Activated CD4-positive, alpha-beta memory T cell treated with anti-CD3 and anti-CD28 coated beads for 36 hours (primary cell): ENCODE measurements at regions of chr13 and their contacts with region 1.

Region 1: GRCh38 chr13:112443995-112444860 is 68.1 kb downstream of the SPACA7 start:
- DNase-seq: peak; percentile 75
- H3K4me3 Mint-ChIP-seq: no peak overlapping the region
- H3K27ac Mint-ChIP-seq: no peak overlapping the region
- H3K4me1 Mint-ChIP-seq: no peaks in the 10 kb centered on the region
- H3K27me3 Mint-ChIP-seq: peaks cover 15% of the 10 kb centered on the region

Region 2: DNA sequence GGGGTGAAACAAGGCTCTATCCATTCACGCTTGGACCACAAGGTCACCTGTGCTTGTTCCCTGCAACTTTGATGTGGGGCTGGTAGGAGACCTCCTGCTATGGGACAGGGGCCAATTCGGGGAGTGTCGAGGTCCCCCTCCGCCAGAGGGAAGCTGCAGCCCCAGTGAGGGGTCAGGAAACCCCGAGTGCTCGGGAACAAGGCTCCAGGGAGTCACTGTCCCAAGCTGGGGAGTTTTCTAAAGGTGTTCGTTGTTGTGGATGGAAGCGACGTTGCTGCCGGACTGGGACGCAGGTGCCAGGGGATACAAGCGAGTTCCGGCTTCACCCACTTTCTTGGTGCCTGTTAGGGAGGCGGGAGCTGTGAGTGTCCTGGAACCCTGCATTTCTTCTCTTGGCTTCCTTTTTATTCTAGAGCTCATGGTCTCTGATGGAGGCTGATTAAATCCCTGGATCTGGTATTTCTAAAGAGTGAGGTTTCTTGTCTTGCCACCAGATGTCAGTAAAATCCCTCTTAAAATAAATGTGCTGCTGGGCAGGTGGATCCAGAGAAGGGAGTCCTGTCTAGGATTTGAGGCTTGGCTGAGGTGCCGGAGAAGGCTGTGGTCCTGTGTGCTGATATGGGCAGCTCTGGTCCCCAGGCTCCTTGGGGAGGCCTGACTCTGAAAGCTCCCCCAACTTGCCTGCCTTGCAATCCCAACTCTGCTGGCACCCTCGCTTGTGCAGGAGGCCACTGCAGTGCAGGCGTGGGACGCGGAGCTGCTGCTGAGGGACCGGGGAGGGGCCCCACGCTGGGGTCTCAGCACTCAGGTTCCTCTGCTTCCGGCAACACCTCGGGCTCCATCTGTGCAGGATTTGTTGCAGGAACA is 969.9 kb before region 1 on chr13:
- CTCF ChIA-PET with region 1: interaction called, 3 read pairs
- POLR2A ChIA-PET with region 1: no interaction called
- intact Hi-C with region 1: loop called (anchors 10 kb)
- DNase-seq: no peak
- H3K4me3 Mint-ChIP-seq: no peak overlapping the region
- H3K27ac Mint-ChIP-seq: no peak overlapping the region
- H3K4me1 Mint-ChIP-seq: no peaks in the 10 kb centered on the region
- H3K27me3 Mint-ChIP-seq: no peaks in the 10 kb centered on the region

Region 3: GRCh38 chr13:112592647-112593046 is 148.4 kb after region 1 on chr13:
- CTCF ChIA-PET with region 1: no interaction called
- POLR2A ChIA-PET with region 1: no interaction called
- intact Hi-C with region 1: no loop called
- DNase-seq: no peak
- H3K4me3 Mint-ChIP-seq: no peak overlapping the region
- H3K27ac Mint-ChIP-seq: no peak overlapping the region
- H3K4me1 Mint-ChIP-seq: peaks cover 13% of the 10 kb centered on the region
- H3K27me3 Mint-ChIP-seq: peaks cover 8% of the 10 kb centered on the region

Region 4: GRCh38 chr13:112767506-112768471 is 323.6 kb after region 1 on chr13:
- CTCF ChIA-PET with region 1: no interaction called
- POLR2A ChIA-PET with region 1: no interaction called
- intact Hi-C with region 1: no loop called
- DNase-seq: no peak
- H3K4me3 Mint-ChIP-seq: no peak overlapping the region
- H3K27ac Mint-ChIP-seq: peak overlapping the region; percentile 25
- H3K4me1 Mint-ChIP-seq: peaks cover 32% of the 10 kb centered on the region
- H3K27me3 Mint-ChIP-seq: no peaks in the 10 kb centered on the region